ENCODE measurements at regions of chr20 and their contacts with region 1.

Region 1: GRCh38 chr20:17682103-17682888 is at the start of gene RRBP1:
- DNase-seq: peak; percentile 97 to 98 (median 98)
- H3K4me3 ChIP-seq: peak within 1 kb of the TSS; percentile 58
- H3K4me3 Mint-ChIP-seq: peak within 1 kb of the TSS; percentile 78 to 95 (median 88)
- H3K27ac ChIP-seq: peak within 1 kb of the TSS; percentile 52
- H3K27ac Mint-ChIP-seq: peak within 1 kb of the TSS; percentile 48 to 94 (median 82)
- H3K4me1 ChIP-seq: peaks cover 13% of the 10 kb centered on the region
- H3K4me1 Mint-ChIP-seq: peaks cover 18 to 29% (median 22%) of the 10 kb centered on the region in 3 donors
- H3K27me3 ChIP-seq: peaks cover 12% of the 10 kb centered on the region
- H3K27me3 Mint-ChIP-seq: peaks cover 11 to 35% of the 10 kb centered on the region in 2 donors
- total RNA-seq, gene RRBP1: 22.8 to 25.3 TPM

Region 2: GRCh38 chr20:17495826-17496225 is 186.5 kb before region 1 on chr20:
- CTCF ChIA-PET with region 1: no interaction called
- POLR2A ChIA-PET with region 1: no interaction called
- DNase-seq: no peak
- H3K4me3 ChIP-seq: no peak overlapping the region
- H3K4me3 Mint-ChIP-seq: no peak overlapping the region
- H3K27ac ChIP-seq: no peak overlapping the region
- H3K27ac Mint-ChIP-seq: no peak overlapping the region
- H3K4me1 ChIP-seq: no peaks in the 10 kb centered on the region
- H3K4me1 Mint-ChIP-seq: no peaks in the 10 kb centered on the region
- H3K27me3 ChIP-seq: no peaks in the 10 kb centered on the region
- H3K27me3 Mint-ChIP-seq: peaks cover 6 to 8% of the 10 kb centered on the region in 2 donors

Region 3: DNA sequence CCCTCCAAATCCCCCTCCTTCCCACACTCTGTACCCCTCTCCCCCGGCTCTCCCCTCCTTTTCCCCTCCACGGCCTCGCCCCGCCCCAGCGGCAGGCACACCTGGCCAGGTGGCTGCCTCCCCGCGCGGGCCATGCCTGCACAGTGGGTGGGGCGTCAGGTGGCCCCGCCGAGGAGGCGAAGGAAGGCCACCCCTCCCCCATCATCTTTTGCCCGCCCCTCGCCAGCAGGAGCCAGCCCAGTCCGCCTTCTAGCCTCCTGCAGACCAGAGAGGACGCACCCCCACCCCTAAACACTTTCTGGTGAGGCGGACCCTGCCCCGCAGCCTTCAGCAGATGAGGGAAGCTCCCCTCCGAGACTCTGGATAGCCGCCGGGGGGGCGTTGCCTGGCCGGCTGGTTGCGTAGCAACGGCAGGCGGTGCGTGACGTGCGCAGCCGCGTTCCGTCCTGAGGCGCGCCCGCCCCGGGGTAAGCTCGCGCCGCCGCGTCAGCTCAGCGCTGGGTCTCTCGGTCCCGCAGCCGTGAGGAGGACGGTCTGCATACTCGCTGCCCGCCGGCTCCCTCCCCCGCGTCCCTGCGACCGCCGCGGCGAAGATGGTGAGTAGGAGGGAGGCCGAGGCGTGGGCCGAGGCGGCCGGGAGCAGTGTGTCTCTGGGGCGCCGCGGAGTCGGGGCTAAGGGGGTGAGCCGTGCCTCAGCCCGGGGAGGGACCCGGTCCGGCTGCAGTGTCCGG is 112.5 kb before region 1 on chr20 and contains the start of gene DSTN:
- CTCF ChIA-PET with region 1: interaction called, 15 read pairs
- POLR2A ChIA-PET with region 1: interaction called, 17 read pairs
- DNase-seq: peak; percentile 82 to 91 (median 89)
- H3K4me3 ChIP-seq: peak within 1 kb of the TSS; percentile 75
- H3K4me3 Mint-ChIP-seq: peak within 1 kb of the TSS; percentile 88 to 97 (median 94)
- H3K27ac ChIP-seq: peak within 1 kb of the TSS; percentile 84
- H3K27ac Mint-ChIP-seq: peak within 1 kb of the TSS; percentile 92 to 97 (median 94)
- H3K4me1 ChIP-seq: peaks cover 12% of the 10 kb centered on the region
- H3K4me1 Mint-ChIP-seq: peaks cover 28 to 48% (median 31%) of the 10 kb centered on the region in 3 donors
- H3K27me3 ChIP-seq: no peaks in the 10 kb centered on the region
- H3K27me3 Mint-ChIP-seq: peaks cover 2 to 6% of the 10 kb centered on the region in 2 donors
- total RNA-seq, gene DSTN: 66.4 to 66.9 TPM

Region 4: DNA sequence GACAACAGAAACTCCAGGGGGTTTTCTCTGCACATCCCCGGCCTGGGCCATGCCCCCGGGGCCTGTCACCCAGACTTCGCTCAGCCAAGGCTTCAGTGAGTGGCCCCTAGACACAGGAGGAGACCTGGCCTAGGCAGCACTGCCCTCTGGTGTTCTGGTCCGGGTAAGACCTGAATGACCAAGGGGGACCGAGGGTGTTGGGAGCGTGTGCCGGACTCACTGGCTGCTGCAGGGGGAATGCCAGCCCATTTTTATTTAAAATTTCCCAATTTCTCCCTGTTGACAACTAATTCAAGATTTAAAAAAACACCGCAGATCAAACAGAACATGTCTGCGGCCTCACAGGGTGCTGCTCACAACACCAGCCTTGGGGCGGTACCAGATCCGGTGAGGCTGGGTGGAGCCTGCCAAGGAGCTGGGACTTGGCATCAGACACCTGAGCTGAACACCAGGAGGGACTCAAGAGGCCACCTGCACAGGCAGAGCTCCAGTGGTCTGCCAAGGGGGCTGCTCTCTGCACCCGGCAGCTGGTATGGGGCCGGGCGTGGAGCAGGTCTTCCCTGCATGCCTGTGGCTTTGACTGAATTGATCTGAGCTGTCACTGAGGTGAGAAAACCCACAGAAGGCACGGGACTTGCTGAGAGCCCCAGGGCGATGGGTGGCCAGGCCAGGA is 64.6 kb before region 1 on chr20:
- CTCF ChIA-PET with region 1: interaction called, 10 read pairs
- POLR2A ChIA-PET with region 1: interaction called, 4 read pairs
- DNase-seq: peak in 4 of 5 donors; percentile 34 to 60 (median 38)
- H3K4me3 ChIP-seq: no peak overlapping the region
- H3K4me3 Mint-ChIP-seq: no peak overlapping the region
- H3K27ac ChIP-seq: no peak overlapping the region
- H3K27ac Mint-ChIP-seq: peak overlapping the region in 5 of 8 donors; percentile 29 to 59 (median 52)
- H3K4me1 ChIP-seq: peaks cover 2% of the 10 kb centered on the region
- H3K4me1 Mint-ChIP-seq: peaks cover 4 to 11% (median 9%) of the 10 kb centered on the region in 3 donors
- H3K27me3 ChIP-seq: no peaks in the 10 kb centered on the region
- H3K27me3 Mint-ChIP-seq: no peaks in the 10 kb centered on the region

Region 5: DNA sequence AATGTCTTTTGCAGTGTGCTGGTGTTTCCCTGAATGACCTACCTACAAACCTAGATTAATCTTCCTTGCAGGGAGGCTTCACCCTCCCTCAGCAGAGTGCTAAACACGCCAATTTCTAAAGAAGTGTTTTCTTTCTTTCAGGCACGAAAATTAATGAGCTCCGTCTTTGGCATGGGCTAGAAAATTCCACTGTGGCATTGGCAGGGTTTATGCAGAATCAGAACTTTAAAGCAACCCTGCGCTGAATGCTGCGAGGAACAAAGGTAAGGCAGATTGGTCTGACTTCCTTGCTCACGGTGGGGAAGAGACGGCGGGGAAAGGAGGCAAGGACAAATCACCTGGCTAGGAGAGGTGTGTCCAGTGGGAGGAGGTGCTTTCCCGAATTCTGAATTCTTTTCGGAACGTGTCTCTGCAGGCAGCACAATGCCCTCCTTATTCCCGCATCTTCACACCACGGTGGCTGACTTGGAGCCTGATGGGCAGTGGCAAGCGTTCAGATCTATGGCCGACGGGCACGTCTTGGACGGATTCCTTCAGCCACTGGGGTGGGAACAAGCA is 11.2 kb after region 1 on chr20:
- CTCF ChIA-PET with region 1: interaction called, 32 read pairs
- POLR2A ChIA-PET with region 1: no interaction called
- DNase-seq: no peak
- H3K4me3 ChIP-seq: no peak overlapping the region
- H3K4me3 Mint-ChIP-seq: no peak overlapping the region
- H3K27ac ChIP-seq: no peak overlapping the region
- H3K27ac Mint-ChIP-seq: no peak overlapping the region
- H3K4me1 ChIP-seq: no peaks in the 10 kb centered on the region
- H3K4me1 Mint-ChIP-seq: no peaks in the 10 kb centered on the region
- H3K27me3 ChIP-seq: peaks cover 11% of the 10 kb centered on the region
- H3K27me3 Mint-ChIP-seq: peaks cover 17 to 51% of the 10 kb centered on the region in 2 donors

Region 6: DNA sequence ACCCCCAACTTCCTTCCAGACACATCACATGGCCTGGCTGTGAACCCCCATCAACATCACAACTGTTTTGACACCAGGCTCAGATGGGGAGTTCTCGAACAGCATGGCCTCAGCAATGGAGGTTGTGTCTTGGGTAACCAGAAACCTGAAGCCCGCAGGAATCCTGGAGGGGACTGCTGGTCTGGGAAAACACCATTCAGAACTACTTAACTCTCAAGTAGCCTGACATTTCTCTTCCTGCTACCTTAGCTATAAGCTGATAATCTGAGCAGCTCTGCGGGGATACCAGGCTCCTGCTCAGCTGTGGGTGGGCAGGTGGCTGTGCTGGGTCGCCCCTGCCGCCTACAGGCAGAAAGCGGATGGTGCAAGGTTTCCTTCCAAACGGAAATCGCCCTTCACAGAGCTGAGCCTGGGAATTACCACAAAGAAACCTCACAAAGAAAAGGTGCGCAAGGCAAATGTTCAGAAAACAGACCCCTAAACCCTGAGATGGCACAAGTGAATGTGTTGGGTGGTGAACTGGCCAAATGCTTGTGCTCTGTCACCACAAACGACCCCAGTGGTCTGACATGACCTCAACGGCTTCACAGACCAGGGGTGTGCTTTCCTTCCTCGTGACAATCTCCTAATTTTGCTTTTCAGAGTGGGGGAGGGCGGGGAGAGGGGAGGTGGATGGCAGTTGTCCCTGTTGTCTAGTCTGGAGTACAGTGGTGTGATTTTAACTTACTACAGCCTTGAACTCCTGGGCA is 256.7 kb after region 1 on chr20:
- CTCF ChIA-PET with region 1: interaction called, 21 read pairs
- POLR2A ChIA-PET with region 1: interaction called, 3 read pairs
- DNase-seq: peak; percentile 43 to 68 (median 47)
- H3K4me3 ChIP-seq: no peak overlapping the region
- H3K4me3 Mint-ChIP-seq: peak overlapping the region in 6 of 7 donors; percentile 11 to 65 (median 38)
- H3K27ac ChIP-seq: no peak overlapping the region
- H3K27ac Mint-ChIP-seq: peak overlapping the region in 7 of 8 donors; percentile 7 to 79 (median 25)
- H3K4me1 ChIP-seq: peaks cover 7% of the 10 kb centered on the region
- H3K4me1 Mint-ChIP-seq: peaks cover 7 to 18% (median 14%) of the 10 kb centered on the region in 3 donors
- H3K27me3 ChIP-seq: no peaks in the 10 kb centered on the region
- H3K27me3 Mint-ChIP-seq: no peaks in the 10 kb centered on the region

Region 7: GRCh38 chr20:17968366-17969279 is 286.3 kb after region 1 on chr20 and contains the starts of genes MGME1 and SNX5:
- CTCF ChIA-PET with region 1: interaction called, 16 read pairs
- POLR2A ChIA-PET with region 1: interaction called, 17 read pairs
- DNase-seq: peak; percentile 97 to 99 (median 99)
- H3K4me3 ChIP-seq: peak within 1 kb of the TSS; percentile 95
- H3K4me3 Mint-ChIP-seq: peak within 1 kb of the TSS; percentile 92 to 98 (median 96)
- H3K27ac ChIP-seq: peak within 1 kb of the TSS; percentile 90
- H3K27ac Mint-ChIP-seq: peak within 1 kb of the TSS; percentile 97 to 99 (median 98)
- H3K4me1 ChIP-seq: peaks cover 61% of the 10 kb centered on the region
- H3K4me1 Mint-ChIP-seq: peaks cover 68 to 83% (median 78%) of the 10 kb centered on the region in 3 donors
- H3K27me3 ChIP-seq: no peaks in the 10 kb centered on the region
- H3K27me3 Mint-ChIP-seq: no peaks in the 10 kb centered on the region
- total RNA-seq, gene MGME1: 29.2 to 31.8 TPM
- total RNA-seq, gene SNX5: 174 to 191 TPM

Region 8: GRCh38 chr20:17995967-17996819 is 313.9 kb after region 1 on chr20:
- CTCF ChIA-PET with region 1: interaction called, 20 read pairs
- POLR2A ChIA-PET with region 1: no interaction called
- DNase-seq: peak; percentile 3 to 59 (median 51)
- H3K4me3 ChIP-seq: no peak overlapping the region
- H3K4me3 Mint-ChIP-seq: no peak overlapping the region
- H3K27ac ChIP-seq: no peak overlapping the region
- H3K27ac Mint-ChIP-seq: peak overlapping the region in 2 of 8 donors; percentile 9 to 19
- H3K4me1 ChIP-seq: peaks cover 3% of the 10 kb centered on the region
- H3K4me1 Mint-ChIP-seq: peaks cover 5 to 7% (median 6%) of the 10 kb centered on the region in 3 donors
- H3K27me3 ChIP-seq: no peaks in the 10 kb centered on the region
- H3K27me3 Mint-ChIP-seq: no peaks in the 10 kb centered on the region